ENCODE measurements at regions of chr13 and their contacts with region 1.

Region 1: DNA sequence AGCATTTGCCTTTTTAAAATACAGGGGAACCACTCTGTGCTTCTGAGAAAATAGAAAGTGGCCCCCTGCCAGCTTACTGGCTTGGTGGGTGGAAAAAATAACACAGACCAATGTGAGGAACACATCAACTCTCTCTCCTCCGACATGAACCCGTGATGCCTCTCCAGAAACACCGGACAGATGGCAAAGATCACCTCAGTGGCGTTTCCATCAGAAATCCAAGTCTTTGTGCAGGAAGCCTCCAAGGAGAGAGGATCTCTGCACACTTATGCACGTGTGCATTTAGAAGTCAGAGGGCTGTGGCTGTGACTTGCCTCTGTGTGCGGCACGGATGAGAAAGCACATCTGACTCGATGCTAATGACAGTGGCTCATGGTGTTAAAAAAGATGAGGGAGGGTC is 112.3 kb upstream of the KLF12 start:
- DNase-seq: peak in 3 of 10 donors; percentile 30 to 40 (median 34)
- ATAC-seq: peak; percentile 35 to 48
- H3K4me3 Mint-ChIP-seq: peak overlapping the region; percentile 60 to 88 (median 83)
- H3K27ac Mint-ChIP-seq: peak overlapping the region; percentile 92 to 99 (median 94)
- H3K4me1 Mint-ChIP-seq: peaks cover 53 to 96% (median 95%) of the 10 kb centered on the region in 4 donors
- H3K27me3 Mint-ChIP-seq: no peaks in the 10 kb centered on the region

Region 2: DNA sequence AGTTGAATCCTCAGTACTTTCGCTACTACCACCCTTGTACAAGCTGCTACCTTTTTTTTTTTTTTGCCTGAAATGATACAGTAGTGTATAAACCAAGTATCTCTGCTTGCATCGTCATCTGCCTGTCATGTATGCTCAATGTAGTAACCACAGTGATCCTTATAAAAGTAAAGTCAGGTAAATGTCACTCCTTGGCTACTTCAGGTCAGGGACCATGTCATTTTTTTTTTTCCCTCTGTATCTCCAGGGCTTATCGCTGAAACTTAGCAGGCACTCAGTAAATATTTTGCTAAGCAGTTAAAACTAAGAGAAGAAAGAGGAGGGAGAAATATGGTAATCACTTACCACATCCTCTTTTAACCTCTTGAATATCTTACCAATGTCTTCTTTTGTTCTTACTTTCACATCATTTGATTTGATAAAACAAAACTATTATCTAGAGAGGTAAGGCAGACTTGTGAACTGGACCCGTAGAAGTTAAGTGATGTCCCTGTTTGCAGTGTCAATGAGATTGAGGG is 15.4 kb before region 1 on chr13:
- POLR2A ChIA-PET with region 1: interaction called, 19 read pairs
- DNase-seq: peak in 4 of 10 donors; percentile 13 to 72 (median 64)
- ATAC-seq: peak; percentile 79 to 88
- H3K4me3 Mint-ChIP-seq: peak overlapping the region; percentile 69 to 94 (median 88)
- H3K27ac Mint-ChIP-seq: peak overlapping the region; percentile 85 to 98 (median 92)
- H3K4me1 Mint-ChIP-seq: peaks cover 12 to 38% (median 34%) of the 10 kb centered on the region in 4 donors
- H3K27me3 Mint-ChIP-seq: no peaks in the 10 kb centered on the region

Measured in naive thymus-derived CD8-positive, alpha-beta T cell (primary cell).